Sigmoid colon (tissue), 7 donors: ENCODE measurements at regions of chr11 and their contacts with region 1.

Region 1: GRCh38 chr11:36492724-36493304 is 17.3 kb downstream of the TRAF6 start:
- DNase-seq: no peak
- H3K4me3 ChIP-seq: no peak overlapping the region
- H3K27ac ChIP-seq: no peak overlapping the region
- H3K4me1 ChIP-seq: no peaks in the 10 kb centered on the region
- H3K27me3 ChIP-seq: no peaks in the 10 kb centered on the region
- CTCF ChIP-seq: peak in 3 of 4 experiments; percentile 29 to 75 (median 35)
- EP300 ChIP-seq: no peak
- POLR2A ChIP-seq: no peak

Region 2: DNA sequence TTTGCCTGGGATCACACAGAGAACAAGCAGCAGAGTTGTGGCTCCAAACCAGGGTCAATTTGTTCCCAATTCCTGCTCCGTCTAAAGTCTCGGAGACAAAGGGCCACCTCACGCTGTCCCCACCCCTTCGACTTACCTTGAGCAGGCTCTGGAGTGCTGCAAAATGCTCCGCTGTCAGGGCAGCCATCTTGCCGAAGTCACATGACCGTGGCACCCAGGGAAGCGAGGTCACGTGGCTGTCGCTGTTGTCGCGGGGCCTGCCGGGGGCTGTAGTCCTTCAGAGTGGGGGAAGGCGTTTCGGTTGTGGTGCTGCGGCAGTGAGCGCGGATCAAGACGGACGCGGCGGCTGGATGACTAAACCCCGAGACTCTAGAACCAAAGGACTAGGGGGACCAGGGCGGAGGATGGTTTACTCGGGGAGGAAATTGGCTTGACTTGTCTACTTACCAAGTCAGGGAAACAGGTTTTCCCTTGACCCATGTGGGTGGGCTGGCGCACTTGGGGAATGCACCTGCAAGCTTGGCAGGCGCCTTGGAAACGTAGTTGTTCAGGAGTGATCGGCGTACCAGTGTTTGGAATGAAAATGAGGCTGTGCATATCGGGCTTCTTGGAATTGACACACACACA is 203.5 kb before region 1 on chr11 and contains the start of gene COMMD9:
- intact Hi-C with region 1: loop called (anchors 5 kb)
- DNase-seq: peak; percentile 97
- H3K4me3 ChIP-seq: peak within 1 kb of the TSS; percentile 44 to 64 (median 55)
- H3K27ac ChIP-seq: peak within 1 kb of the TSS; percentile 10 to 59 (median 42)
- H3K4me1 ChIP-seq: peaks cover 0 to 17% (median 12%) of the 10 kb centered on the region in 4 donors
- H3K27me3 ChIP-seq: no peaks in the 10 kb centered on the region
- CTCF ChIP-seq: no peak
- EP300 ChIP-seq: no peak
- POLR2A ChIP-seq: no peak
- total RNA-seq, gene COMMD9: 15.5 to 44.6 (median 26.2) TPM

Region 3: DNA sequence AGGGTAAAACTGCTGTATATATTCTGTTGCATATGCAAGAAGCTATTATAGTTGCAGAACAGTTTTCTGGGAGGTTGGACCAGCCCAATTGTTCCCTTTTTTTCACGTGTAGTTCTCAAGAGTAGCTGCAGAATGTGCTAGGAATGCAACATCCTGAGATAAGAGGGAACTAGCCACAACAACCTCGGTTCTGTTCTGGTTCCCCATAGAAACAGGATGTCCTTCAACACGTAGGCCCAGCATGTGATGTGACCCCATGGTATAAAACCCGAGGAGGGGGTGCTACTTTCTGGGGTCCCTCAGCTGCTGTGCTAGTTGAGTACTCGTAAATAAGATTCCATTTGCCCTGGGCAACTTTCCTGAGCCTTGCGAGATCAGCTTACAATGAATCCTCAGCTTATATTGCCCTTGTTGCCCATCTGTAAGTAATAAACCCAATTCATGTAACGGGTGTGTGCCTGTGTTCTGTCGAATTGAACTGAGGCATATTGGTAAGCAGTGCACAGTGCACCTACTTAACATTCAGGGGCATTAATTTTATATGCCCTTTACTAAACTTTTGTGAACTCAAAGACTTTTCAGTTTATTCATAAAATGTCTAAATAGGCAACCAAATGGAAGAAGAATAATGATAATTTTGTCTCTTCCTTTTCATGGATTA is 40.3 kb after region 1 on chr11:
- intact Hi-C with region 1: no loop called
- DNase-seq: no peak
- H3K4me3 ChIP-seq: no peak overlapping the region
- H3K27ac ChIP-seq: no peak overlapping the region
- H3K4me1 ChIP-seq: no peaks in the 10 kb centered on the region
- H3K27me3 ChIP-seq: no peaks in the 10 kb centered on the region
- CTCF ChIP-seq: no peak
- EP300 ChIP-seq: no peak
- POLR2A ChIP-seq: no peak